ENCODE measurements at regions of chr2 and their contacts with region 1.

Region 1: GRCh38 chr2:18378020-18378653 is 182.3 kb downstream of the RDH14 start:
- DNase-seq: peak; percentile 66
- H3K4me3 Mint-ChIP-seq: no peak overlapping the region
- H3K27ac Mint-ChIP-seq: no peak overlapping the region
- H3K4me1 Mint-ChIP-seq: peaks cover 6% of the 10 kb centered on the region
- H3K27me3 Mint-ChIP-seq: peaks cover 13% of the 10 kb centered on the region
- CTCF ChIP-seq: peak; percentile 82

Region 2: DNA sequence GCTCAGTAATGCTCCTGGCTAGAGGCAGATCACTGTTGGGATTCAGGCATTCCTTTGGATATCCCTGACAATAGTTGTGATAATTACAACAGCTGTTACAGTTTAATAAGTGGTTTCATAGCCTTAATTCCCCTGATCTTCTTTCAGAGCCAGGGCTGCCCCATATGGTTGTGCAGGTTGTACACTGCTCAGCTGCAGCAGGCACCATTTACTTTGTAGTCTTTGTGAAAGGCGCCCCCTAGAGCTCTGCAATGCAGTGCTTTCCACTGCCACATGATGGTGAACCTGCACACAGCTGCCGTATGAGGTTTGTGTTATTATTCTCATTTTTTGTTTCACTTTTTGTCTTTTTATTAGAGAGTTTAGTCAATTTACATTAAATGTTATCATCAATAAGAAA is 260.5 kb before region 1 on chr2:
- CTCF ChIA-PET with region 1: interaction called, 3 read pairs
- POLR2A ChIA-PET with region 1: no interaction called
- intact Hi-C with region 1: loop called (anchors 1 kb)
- DNase-seq: peak; percentile 72
- H3K4me3 Mint-ChIP-seq: no peak overlapping the region
- H3K27ac Mint-ChIP-seq: no peak overlapping the region
- H3K4me1 Mint-ChIP-seq: no peaks in the 10 kb centered on the region
- H3K27me3 Mint-ChIP-seq: peaks cover 34% of the 10 kb centered on the region
- CTCF ChIP-seq: peak; percentile 92

Region 3: GRCh38 chr2:18171191-18172139 is 206.7 kb before region 1 on chr2:
- CTCF ChIA-PET with region 1: interaction called, 12 read pairs
- POLR2A ChIA-PET with region 1: no interaction called
- intact Hi-C with region 1: no loop called
- DNase-seq: peak; percentile 65
- H3K4me3 Mint-ChIP-seq: no peak overlapping the region
- H3K27ac Mint-ChIP-seq: no peak overlapping the region
- H3K4me1 Mint-ChIP-seq: peaks cover 18% of the 10 kb centered on the region
- H3K27me3 Mint-ChIP-seq: peaks cover 9% of the 10 kb centered on the region
- CTCF ChIP-seq: no peak

Region 4: DNA sequence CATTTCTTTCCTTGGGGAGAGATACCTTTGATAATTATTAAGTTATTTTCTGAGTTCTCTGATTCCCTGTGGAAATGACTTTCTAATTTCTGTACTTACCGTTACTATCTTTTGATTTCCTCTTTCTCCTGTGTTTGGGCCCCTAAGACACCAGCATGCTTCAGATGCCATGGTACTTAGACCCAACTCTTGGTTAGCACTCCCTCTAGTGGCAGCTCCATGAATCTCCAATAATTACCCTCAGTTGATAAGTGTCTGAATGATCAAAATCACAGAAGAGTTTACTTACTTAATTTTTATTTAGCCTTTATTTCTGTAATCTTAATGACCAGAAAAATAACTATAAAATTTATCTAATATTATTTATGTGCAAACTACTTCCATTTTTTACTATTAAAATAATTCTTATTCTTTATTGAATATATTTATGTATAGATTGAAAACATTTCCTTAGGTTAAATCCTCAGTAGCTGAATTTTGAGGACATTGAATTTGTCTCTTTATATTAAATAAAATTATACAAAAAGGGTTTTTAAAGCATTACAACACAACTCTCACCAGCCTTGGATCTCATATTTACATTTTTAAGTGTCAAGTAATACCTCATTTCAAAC is 199.3 kb before region 1 on chr2:
- CTCF ChIA-PET with region 1: interaction called, 20 read pairs
- POLR2A ChIA-PET with region 1: no interaction called
- intact Hi-C with region 1: loop called (anchors 2 kb)
- DNase-seq: peak; percentile 74
- H3K4me3 Mint-ChIP-seq: no peak overlapping the region
- H3K27ac Mint-ChIP-seq: no peak overlapping the region
- H3K4me1 Mint-ChIP-seq: no peaks in the 10 kb centered on the region
- H3K27me3 Mint-ChIP-seq: peaks cover 11% of the 10 kb centered on the region
- CTCF ChIP-seq: peak; percentile 77

Region 5: GRCh38 chr2:18219676-18220075 is 158.5 kb before region 1 on chr2:
- CTCF ChIA-PET with region 1: interaction called, 7 read pairs
- POLR2A ChIA-PET with region 1: no interaction called
- intact Hi-C with region 1: loop called (anchors 2 kb)
- DNase-seq: no peak
- H3K4me3 Mint-ChIP-seq: no peak overlapping the region
- H3K27ac Mint-ChIP-seq: no peak overlapping the region
- H3K4me1 Mint-ChIP-seq: no peaks in the 10 kb centered on the region
- H3K27me3 Mint-ChIP-seq: no peaks in the 10 kb centered on the region
- CTCF ChIP-seq: peak; percentile 11

Region 6: DNA sequence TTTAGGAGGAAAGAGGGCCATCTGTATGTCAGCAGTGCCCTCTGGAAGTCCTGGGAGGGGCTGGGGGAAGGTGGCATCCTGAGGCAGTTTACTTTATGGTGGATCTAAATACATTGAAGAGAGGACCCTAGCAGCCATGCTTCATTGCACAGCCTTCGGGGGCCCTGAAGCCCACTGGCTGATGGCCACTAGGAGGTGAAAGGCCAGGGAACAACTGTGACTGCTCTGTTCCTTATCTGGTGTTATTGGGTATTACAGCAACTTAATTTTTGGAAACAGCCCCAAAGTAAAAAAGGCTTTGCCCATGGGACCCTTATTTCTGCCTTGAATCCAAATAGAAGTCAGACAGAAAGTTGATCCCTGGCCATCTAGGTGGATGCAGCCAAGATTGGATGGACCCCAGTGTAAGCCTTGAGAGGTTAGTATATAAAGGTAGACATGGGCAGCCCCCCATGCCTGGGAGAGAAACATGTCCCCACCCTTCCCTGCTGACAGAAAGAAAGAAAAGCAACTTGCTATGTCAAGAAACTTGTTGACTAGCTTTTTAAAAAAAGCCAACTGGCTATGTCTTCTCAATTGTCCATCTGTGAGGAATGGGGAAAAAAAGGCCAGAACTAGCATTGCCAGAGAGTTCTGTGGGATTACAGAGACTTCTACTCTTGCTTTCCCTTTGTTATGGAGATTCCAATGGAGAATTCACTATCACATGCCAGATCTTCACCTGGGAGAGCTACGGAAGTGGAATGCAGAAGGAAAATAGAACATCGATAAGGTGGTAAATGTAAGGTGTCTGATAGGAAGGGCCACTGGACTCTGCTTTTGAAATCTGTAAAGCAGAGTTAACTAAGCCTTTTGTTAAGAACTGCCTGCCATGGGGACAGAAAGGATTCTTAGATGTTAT is 1038.9 kb after region 1 on chr2:
- CTCF ChIA-PET with region 1: no interaction called
- POLR2A ChIA-PET with region 1: no interaction called
- intact Hi-C with region 1: no loop called
- DNase-seq: no peak
- H3K4me3 Mint-ChIP-seq: no peak overlapping the region
- H3K27ac Mint-ChIP-seq: no peak overlapping the region
- H3K4me1 Mint-ChIP-seq: no peaks in the 10 kb centered on the region
- H3K27me3 Mint-ChIP-seq: no peaks in the 10 kb centered on the region
- CTCF ChIP-seq: no peak